ENCODE measurements at regions of chr18 and their contacts with region 1.

Region 1: DNA sequence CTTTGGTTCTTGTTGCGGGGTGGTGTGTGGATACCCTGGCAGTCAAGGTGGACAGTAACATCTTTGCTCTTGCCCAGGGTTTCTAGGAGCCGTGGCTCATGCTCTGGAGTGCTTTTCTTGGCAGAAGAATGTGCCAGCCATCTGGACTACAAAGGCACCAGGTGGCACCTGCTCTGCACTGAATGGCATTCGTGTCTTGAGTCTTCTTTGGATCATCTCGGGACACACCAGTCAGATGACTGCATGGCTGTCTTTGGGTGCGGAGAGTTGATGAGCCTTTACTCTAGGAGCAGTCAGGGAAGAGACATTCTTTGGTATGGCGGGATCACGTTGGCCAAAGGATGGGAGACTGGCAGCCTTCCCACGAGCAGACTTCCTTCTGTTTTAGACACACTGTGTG is 104.1 kb upstream of the SEC11C start:
- DNase-seq: no peak
- ATAC-seq: no peak
- H3K4me3 ChIP-seq: no peak overlapping the region
- H3K27ac ChIP-seq: no peak overlapping the region
- H3K4me1 ChIP-seq: peaks cover 0 to 7% (median 0%) of the 10 kb centered on the region in 12 donors
- H3K27me3 ChIP-seq: no peaks in the 10 kb centered on the region
- CTCF ChIP-seq: no peak
- POLR2A ChIP-seq: no peak

Region 2: GRCh38 chr18:59005262-59005661 is 30.3 kb before region 1 on chr18:
- intact Hi-C with region 1: loop called in 1 of 10 experiments (anchors 5 kb)
- DNase-seq: peak in 4 of 5 donors; percentile 64 to 82 (median 77)
- ATAC-seq: peak; percentile 78 to 85 (median 83)
- H3K4me3 ChIP-seq: no peak overlapping the region
- H3K27ac ChIP-seq: peak overlapping the region; percentile 48 to 88 (median 72)
- H3K4me1 ChIP-seq: peaks cover 0 to 41% (median 14%) of the 10 kb centered on the region in 12 donors
- H3K27me3 ChIP-seq: no peaks in the 10 kb centered on the region
- CTCF ChIP-seq: no peak
- POLR2A ChIP-seq: peak in 1 of 2 donors; percentile 18